Activated CD4-positive, alpha-beta T cell treated with anti-CD3 and anti-CD28 coated beads for 36 hours (primary cell): ENCODE measurements at regions of chr12 and their contacts with region 1.

Region 1: DNA sequence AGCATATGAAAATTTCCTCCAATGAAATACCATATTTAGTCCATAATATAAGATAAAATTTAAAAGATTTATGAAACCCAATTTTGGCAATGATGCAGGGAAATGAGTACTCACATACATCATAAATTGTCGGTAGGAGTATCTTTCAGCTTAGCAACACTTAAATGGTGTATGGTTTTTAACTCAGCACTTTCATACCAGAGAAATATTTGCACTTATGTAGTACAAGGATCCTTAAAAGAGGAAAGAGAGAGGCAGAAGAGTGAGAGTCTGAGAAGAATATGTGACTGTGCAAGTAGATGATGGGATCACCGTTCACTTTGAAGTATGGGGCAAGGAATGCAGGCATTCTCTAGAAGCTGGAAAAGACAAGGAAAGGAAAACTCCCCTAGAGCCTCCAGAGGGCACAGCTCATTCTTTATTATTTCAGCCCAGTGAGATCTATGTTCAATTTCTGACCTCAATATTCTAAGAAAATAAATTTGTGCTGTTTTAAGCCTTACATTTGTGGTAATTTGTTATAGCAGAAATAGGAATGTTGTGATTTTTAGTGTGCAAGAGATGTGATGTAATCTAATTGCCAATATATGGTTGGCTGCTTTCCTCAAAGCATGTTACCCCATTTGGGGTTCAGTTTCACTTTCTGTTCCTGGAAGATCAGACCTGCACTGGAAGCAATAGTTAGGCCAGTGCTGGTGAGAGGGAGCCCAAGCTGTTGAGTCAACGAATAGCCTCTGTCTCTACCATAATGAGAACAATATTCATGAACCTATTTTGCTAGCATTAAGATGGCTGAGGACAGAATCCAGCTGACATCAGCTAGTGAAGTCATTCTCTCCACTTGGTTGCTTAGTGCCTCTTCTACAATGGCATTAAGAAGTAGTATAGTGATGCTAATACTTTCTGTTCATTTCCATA is 379.6 kb upstream of the DCN start:
- DNase-seq: no peak
- ATAC-seq: peak; percentile 44
- H3K4me3 Mint-ChIP-seq: no peak overlapping the region
- H3K27ac Mint-ChIP-seq: no peak overlapping the region
- H3K4me1 Mint-ChIP-seq: peaks cover 25% of the 10 kb centered on the region
- H3K27me3 Mint-ChIP-seq: no peaks in the 10 kb centered on the region

Region 2: GRCh38 chr12:91577586-91578539 is 15.6 kb after region 1 on chr12:
- CTCF ChIA-PET with region 1: interaction called, 14 read pairs
- POLR2A ChIA-PET with region 1: no interaction called
- intact Hi-C with region 1: no loop called
- DNase-seq: no peak
- ATAC-seq: peak; percentile 47
- H3K4me3 Mint-ChIP-seq: peak overlapping the region; percentile 35
- H3K27ac Mint-ChIP-seq: peak overlapping the region; percentile 32
- H3K4me1 Mint-ChIP-seq: peaks cover 8% of the 10 kb centered on the region
- H3K27me3 Mint-ChIP-seq: no peaks in the 10 kb centered on the region

Region 3: GRCh38 chr12:91695951-91696350 is 133.7 kb after region 1 on chr12:
- CTCF ChIA-PET with region 1: no interaction called
- POLR2A ChIA-PET with region 1: no interaction called
- intact Hi-C with region 1: no loop called
- DNase-seq: no peak
- ATAC-seq: no peak
- H3K4me3 Mint-ChIP-seq: no peak overlapping the region
- H3K27ac Mint-ChIP-seq: no peak overlapping the region
- H3K4me1 Mint-ChIP-seq: no peaks in the 10 kb centered on the region
- H3K27me3 Mint-ChIP-seq: no peaks in the 10 kb centered on the region